Heart left ventricle (tissue), 16 donors: ENCODE measurements at regions of chr16 and their contacts with region 1.

Region 1: DNA sequence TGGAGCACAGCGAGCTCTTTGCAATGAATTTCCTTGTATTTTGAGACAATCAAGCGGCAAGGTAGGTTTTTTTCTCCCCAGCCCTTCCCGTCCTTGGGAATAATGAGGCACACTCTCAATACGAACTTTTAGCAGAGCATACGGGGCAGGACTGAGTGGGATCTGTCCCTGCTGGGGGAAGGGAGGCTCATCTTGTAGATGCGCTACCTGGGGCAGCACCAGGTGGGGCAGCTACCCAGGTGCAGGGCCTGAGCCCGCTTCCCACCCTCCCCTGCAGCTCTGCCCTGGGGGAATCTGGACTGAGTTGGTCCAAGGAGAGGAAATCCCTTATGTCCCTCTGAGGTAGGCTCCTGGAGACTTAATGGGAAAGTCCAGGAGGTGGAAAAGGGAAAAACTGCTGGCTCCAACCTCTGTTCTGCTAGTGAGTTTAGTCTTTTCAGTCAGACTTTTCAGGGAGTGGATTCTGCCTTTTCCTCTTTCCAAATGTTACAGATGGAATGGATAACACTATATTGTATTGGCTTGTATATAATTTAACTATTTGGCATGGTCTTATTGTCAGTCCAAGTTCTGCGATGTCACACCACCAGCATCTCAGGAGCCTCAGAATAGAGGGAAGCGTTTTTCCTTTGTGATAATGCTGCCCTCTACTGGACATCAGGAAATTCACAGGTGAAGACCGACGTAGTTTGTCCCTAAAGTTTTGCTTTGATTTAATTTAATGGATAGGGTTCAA is 9.6 kb upstream of the CES1 start:
- DNase-seq: no peak
- ATAC-seq: peak in 3 of 4 donors; percentile 62 to 73 (median 67)
- H3K4me3 ChIP-seq: no peak overlapping the region
- H3K27ac ChIP-seq: no peak overlapping the region
- H3K4me1 ChIP-seq: peaks cover 0 to 5% (median 0%) of the 10 kb centered on the region in 12 donors
- H3K27me3 ChIP-seq: peaks cover 0 to 35% (median 4%) of the 10 kb centered on the region in 9 donors
- CTCF ChIP-seq: peak; percentile 67 to 86 (median 78)
- POLR2A ChIP-seq: no peak

Region 2: DNA sequence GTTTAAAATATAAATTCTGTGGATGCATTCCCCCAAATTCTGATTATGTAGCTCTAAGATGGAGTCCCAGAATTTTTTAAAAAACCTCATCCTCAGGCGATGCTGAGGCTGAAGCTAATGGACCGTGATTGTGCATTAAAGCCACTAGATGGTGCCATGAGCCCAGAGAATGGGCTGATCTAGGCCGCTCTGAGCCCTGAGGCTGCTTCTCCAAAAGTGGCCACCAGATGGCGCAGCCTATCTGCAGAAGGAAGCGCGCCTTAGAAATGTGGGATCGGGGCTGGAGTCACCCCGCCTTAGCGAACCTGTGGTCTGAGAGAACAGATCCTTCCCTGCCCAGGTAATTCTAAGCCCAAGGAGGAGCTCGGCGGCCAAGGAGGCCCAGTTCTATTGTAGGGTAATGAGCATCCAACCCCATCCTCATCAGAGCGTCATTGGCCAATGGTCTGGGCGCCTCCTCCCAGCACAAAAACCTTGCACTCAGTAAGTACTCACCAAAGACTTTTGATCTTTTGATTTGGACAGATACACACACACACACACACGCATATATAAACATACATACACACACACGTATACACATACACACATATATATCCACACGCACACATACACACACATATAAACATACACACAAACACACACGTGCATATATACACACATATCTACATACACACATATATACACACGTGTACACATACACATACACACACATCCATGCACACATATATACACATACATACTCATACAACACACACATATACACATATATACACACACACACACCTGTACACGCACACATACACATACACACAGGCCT is 377.2 kb before region 1 on chr16:
- intact Hi-C with region 1: loop called (anchors 1 to 5 kb)
- DNase-seq: peak; percentile 82 to 90 (median 86)
- ATAC-seq: peak; percentile 84 to 95 (median 90)
- H3K4me3 ChIP-seq: peak overlapping the region in 1 of 12 donors; percentile 21
- H3K27ac ChIP-seq: no peak overlapping the region
- H3K4me1 ChIP-seq: peaks cover 0 to 5% (median 0%) of the 10 kb centered on the region in 12 donors
- H3K27me3 ChIP-seq: no peaks in the 10 kb centered on the region
- CTCF ChIP-seq: peak; percentile 99 to 100 (median 100)
- POLR2A ChIP-seq: no peak

Region 3: DNA sequence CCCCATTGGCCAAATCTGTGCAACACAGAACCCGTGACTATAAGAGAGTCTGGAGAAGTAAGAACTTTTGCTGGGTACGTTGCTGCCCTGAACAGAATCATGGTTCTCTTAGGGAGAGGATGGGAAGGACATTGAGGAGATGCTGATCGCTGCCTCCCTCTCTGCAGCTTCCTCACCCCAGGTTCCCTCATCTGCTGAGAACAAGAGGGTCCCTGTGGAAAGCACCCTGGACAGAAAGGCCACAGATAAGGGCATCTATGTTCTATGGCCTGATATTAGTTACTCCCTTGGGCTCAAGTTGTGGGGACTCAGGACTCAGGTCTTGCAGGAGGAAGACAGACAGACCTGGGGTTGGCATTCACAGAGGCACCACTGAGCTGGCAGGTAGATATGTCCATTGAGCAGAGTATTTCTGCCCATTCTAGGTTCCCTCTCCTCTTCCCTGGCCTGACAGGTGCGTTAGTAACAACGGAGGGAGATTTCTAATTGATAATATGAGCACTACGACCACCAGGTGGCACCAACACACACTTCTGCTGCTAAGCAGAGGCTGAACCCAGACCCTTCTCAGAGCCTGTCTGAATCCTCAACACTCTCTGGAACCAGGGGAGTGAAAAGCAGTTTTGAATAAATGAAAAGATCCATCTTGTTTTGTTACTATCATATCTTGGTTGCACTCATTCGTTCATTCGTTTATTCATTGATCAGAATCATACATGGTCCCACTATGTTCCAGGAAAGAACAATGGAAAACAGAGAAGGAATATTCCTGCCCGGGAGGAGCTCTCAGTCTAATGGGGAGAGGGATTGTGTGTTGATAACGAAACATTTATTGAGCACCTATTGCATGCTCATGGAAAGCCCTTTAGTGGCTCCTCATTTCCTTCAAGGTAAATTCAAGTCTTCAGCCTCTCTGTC is 130.3 kb before region 1 on chr16:
- intact Hi-C with region 1: loop called (anchors 1 to 2 kb)
- DNase-seq: peak in 4 of 5 donors; percentile 49 to 72 (median 54)
- ATAC-seq: peak in 3 of 4 donors; percentile 63 to 79 (median 72)
- H3K4me3 ChIP-seq: no peak overlapping the region
- H3K27ac ChIP-seq: no peak overlapping the region
- H3K4me1 ChIP-seq: no peaks in the 10 kb centered on the region
- H3K27me3 ChIP-seq: peaks cover 0 to 46% (median 9%) of the 10 kb centered on the region in 9 donors
- CTCF ChIP-seq: peak; percentile 51 to 83 (median 68)
- POLR2A ChIP-seq: no peak